Ascending aorta (tissue), 2 donors: ENCODE measurements at regions of chr1 and their contacts with region 1.

Region 1: GRCh38 chr1:111481387-111482221 is 7.8 kb downstream of the C1orf162 start:
- DNase-seq: peak in 1 of 2 donors; percentile 88
- H3K4me3 ChIP-seq: no peak overlapping the region
- H3K27ac ChIP-seq: no peak overlapping the region
- H3K4me1 ChIP-seq: peaks cover 0 to 7% of the 10 kb centered on the region in 2 donors
- H3K27me3 ChIP-seq: no peaks in the 10 kb centered on the region
- CTCF ChIP-seq: peak; percentile 69 to 78 (median 75)

Region 2: DNA sequence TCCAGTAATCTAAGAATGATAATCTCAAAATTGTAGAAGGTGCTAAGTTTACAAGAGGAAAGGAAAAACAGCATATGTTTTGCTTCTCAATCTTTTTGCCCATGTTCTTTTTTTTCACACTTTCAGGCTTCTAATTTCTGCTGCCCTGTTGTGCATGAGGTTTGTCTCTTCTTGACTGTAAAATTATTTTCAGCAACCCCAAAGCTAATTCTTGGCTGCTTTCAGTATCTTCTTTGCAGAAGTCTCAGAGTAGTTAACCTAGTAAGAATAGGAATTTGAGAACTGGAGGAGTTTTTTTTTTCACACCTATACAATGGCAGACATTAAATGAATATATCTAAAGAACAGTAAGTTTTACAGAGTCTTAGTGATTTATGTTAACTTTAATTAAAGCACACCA is 307.5 kb before region 1 on chr1:
- intact Hi-C with region 1: no loop called
- DNase-seq: no peak
- H3K4me3 ChIP-seq: no peak overlapping the region
- H3K27ac ChIP-seq: no peak overlapping the region
- H3K4me1 ChIP-seq: no peaks in the 10 kb centered on the region
- H3K27me3 ChIP-seq: no peaks in the 10 kb centered on the region
- CTCF ChIP-seq: no peak

Region 3: GRCh38 chr1:111392460-111392945 is 89.1 kb before region 1 on chr1:
- intact Hi-C with region 1: no loop called
- DNase-seq: no peak
- H3K4me3 ChIP-seq: no peak overlapping the region
- H3K27ac ChIP-seq: no peak overlapping the region
- H3K4me1 ChIP-seq: no peaks in the 10 kb centered on the region
- H3K27me3 ChIP-seq: no peaks in the 10 kb centered on the region
- CTCF ChIP-seq: no peak

Region 4: GRCh38 chr1:111656086-111657017 is 174.7 kb after region 1 on chr1:
- intact Hi-C with region 1: loop called (anchors 1 kb)
- DNase-seq: no peak
- H3K4me3 ChIP-seq: no peak overlapping the region
- H3K27ac ChIP-seq: no peak overlapping the region
- H3K4me1 ChIP-seq: peaks cover 0 to 36% of the 10 kb centered on the region in 2 donors
- H3K27me3 ChIP-seq: no peaks in the 10 kb centered on the region
- CTCF ChIP-seq: peak; percentile 47 to 61 (median 49)

Region 5: DNA sequence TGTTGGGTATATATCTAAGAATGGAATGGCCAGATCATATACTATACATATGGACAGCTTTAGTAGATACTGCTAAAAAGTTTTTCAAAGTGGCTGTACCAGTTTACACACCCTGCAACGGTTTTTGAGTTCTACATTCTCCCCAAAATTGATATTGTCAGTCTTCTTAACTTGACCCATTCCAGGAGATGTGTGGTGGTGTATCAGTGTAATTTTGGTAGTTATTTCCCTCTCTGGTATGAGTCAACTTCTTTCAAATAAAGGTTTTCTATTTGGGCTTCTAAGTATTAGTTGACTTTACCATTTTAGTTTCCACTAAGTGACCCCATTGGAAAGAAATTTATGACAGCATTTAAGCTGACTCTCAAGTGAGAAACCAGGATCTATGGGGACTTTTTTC is 228.4 kb after region 1 on chr1:
- intact Hi-C with region 1: loop called (anchors 5 kb)
- DNase-seq: no peak
- H3K4me3 ChIP-seq: no peak overlapping the region
- H3K27ac ChIP-seq: no peak overlapping the region
- H3K4me1 ChIP-seq: no peaks in the 10 kb centered on the region
- H3K27me3 ChIP-seq: no peaks in the 10 kb centered on the region
- CTCF ChIP-seq: no peak

Region 6: DNA sequence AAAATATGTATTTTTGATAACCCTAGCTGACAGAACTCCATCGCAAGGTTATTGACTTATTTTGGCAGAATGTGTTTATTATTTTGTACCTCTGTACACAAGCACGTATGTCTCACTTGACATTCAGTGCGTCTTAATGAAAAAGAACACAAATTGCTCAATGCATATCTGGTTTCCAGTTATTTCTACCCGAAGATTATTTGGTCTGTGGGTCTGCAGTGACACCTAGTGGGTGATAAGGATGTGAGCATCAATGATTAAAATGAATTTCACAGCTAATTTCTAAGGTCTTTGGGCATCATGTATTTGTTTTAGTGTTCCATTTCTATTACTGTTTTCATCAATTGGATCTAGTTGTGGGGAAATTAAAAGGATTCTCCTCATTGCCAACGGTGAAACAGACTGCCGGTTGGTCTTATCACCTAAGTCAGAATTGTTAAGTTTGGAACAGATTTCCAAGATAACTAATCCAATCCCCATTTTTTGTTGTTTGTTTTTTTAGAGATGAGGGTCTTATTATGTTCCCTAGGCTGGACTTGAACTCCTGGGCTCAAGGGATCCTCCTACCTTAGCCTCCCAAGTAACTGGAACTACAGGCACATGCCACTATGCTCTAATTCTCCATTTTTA is 288.0 kb after region 1 on chr1:
- intact Hi-C with region 1: loop called (anchors 1 kb)
- DNase-seq: no peak
- H3K4me3 ChIP-seq: no peak overlapping the region
- H3K27ac ChIP-seq: no peak overlapping the region
- H3K4me1 ChIP-seq: no peaks in the 10 kb centered on the region
- H3K27me3 ChIP-seq: no peaks in the 10 kb centered on the region
- CTCF ChIP-seq: peak; percentile 67 to 86 (median 80)